Activated CD8-positive, alpha-beta memory T cell treated with anti-CD3 and anti-CD28 coated beads, Interleukin-2, amount 10 ng/mL, durations not matched to agents 7 days and 5 days (primary cell): ENCODE measurements at regions of chr5 and their contacts with region 1.

Region 1: DNA sequence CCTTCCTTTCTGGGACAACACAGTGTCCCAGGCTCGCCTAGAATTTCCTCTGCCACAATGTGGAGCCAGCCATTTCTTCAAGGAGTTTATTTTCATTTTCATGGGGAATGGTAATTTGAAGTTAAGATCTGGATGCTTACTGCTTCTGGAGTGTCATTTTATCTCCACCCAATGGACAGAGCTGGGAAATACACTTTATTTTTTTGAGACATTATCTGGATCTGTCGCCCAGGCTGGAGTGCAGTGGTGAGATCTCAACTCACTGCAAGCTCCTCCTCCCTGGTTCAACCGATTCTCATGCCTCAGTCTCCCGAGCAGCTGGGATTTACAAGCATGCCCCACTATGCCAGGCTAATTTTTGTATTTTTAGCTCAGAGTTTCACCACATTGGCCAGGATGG is 12.7 kb upstream of the THG1L start:
- DNase-seq: no peak
- ATAC-seq: peak; percentile 96
- H3K4me3 Mint-ChIP-seq: no peak overlapping the region
- H3K27ac Mint-ChIP-seq: peak overlapping the region; percentile 75
- H3K4me1 Mint-ChIP-seq: peaks cover 33% of the 10 kb centered on the region
- H3K27me3 Mint-ChIP-seq: no peaks in the 10 kb centered on the region

Region 2: DNA sequence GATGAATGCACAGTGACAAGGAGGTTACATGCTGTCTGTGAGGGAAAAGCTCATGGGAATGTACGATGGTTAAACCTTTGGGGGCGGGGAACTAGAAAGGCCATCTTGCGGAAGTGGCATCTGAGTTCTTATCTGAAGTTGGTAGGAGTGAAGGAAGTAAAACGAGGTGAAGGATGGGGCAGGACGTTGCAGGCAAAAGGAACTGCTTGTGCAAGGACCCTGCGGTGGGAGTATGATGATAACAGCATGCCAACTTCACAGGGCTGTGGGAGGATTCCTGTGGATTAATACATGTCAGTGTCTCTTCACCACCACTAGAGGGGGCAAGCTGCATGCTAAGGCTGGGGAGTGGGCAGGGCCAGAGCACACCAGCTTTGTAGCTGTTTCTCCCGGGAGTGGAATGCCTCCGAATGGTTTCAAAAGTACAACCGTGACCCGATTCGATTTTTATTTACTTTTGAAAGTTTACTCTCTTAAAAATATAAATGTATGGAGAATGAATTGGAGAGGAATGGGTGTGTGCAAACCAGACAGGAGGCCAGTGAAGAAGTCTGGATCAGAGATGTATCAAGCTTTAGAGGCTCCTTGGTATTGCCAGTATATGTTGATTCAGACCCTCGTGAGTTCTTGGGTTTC is 390.1 kb before region 1 on chr5:
- CTCF ChIA-PET with region 1: interaction called, 12 read pairs
- DNase-seq: peak; percentile 70
- ATAC-seq: peak; percentile 96
- H3K4me3 Mint-ChIP-seq: no peak overlapping the region
- H3K27ac Mint-ChIP-seq: peak overlapping the region; percentile 47
- H3K4me1 Mint-ChIP-seq: peaks cover 10% of the 10 kb centered on the region
- H3K27me3 Mint-ChIP-seq: no peaks in the 10 kb centered on the region

Region 3: DNA sequence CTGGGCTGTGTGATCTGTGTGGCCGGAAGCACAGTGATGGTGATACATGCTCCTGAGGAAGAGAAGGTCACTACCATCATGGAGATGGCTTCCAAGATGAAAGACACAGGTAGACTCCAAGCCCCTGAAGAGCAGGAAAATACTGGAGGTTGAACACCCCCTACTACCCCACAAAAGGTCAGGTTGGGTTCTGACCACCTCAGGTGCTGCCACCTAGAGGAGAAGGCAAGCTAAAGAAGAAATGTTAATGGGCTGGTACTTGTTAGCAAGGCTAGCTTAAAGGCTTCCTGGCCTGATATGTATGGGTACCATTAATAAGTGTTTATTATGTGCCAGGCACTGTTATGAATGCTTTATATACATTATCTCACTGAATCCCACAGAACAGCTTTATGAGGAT is 246.8 kb before region 1 on chr5:
- CTCF ChIA-PET with region 1: interaction called, 14 read pairs
- DNase-seq: no peak
- ATAC-seq: peak; percentile 50
- H3K4me3 Mint-ChIP-seq: no peak overlapping the region
- H3K27ac Mint-ChIP-seq: no peak overlapping the region
- H3K4me1 Mint-ChIP-seq: no peaks in the 10 kb centered on the region
- H3K27me3 Mint-ChIP-seq: no peaks in the 10 kb centered on the region

Region 4: GRCh38 chr5:157596487-157596886 is 122.0 kb before region 1 on chr5:
- CTCF ChIA-PET with region 1: interaction called, 10 read pairs
- DNase-seq: peak; percentile 83
- ATAC-seq: peak; percentile 71
- H3K4me3 Mint-ChIP-seq: peak overlapping the region; percentile 40
- H3K27ac Mint-ChIP-seq: peak overlapping the region; percentile 84
- H3K4me1 Mint-ChIP-seq: peaks cover 97% of the 10 kb centered on the region
- H3K27me3 Mint-ChIP-seq: no peaks in the 10 kb centered on the region

Region 5: GRCh38 chr5:157689942-157690689 is 28.4 kb before region 1 on chr5:
- CTCF ChIA-PET with region 1: interaction called, 12 read pairs
- DNase-seq: peak; percentile 44
- ATAC-seq: peak; percentile 27
- H3K4me3 Mint-ChIP-seq: no peak overlapping the region
- H3K27ac Mint-ChIP-seq: no peak overlapping the region
- H3K4me1 Mint-ChIP-seq: peaks cover 3% of the 10 kb centered on the region
- H3K27me3 Mint-ChIP-seq: no peaks in the 10 kb centered on the region

Region 6: GRCh38 chr5:158054223-158055110 is 335.9 kb after region 1 on chr5:
- CTCF ChIA-PET with region 1: no interaction called
- DNase-seq: no peak
- ATAC-seq: no peak
- H3K4me3 Mint-ChIP-seq: no peak overlapping the region
- H3K27ac Mint-ChIP-seq: no peak overlapping the region
- H3K4me1 Mint-ChIP-seq: no peaks in the 10 kb centered on the region
- H3K27me3 Mint-ChIP-seq: peaks cover 33% of the 10 kb centered on the region